CD4-positive, alpha-beta T cell (primary cell): ENCODE measurements at regions of chr10 and their contacts with region 1.

Region 1: DNA sequence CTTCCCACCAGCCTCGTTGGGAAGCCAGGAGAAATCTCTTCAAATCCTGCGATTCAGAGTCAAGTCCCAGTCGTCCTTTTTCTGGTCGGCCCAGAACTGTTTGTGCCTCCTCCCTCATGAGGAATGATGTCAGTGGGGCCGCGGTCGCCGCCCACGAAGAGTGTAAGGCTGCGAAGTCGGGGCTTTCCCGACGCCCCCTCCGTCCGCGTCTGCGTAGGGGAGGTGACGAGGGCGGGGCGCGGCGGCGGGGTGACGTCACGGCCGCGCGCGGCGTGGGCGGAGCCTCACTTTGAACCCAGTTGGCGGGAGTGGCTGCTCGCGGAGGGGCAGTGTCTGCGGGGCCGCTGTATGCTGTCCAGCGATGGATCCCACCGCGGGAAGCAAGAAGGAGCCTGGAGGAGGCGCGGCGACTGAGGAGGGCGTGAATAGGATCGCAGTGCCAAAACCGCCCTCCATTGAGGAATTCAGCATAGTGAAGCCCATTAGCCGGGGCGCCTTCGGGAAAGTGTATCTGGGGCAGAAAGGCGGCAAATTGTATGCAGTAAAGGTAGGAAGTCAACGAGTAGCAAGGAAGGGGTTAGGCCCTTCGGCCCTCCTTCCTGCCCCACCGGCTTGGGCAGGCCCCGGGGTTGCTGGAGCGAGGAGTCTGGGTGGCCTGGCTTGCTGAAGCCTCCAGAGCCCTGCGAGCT is at the start of gene MASTL:
- DNase-seq: peak; percentile 88 to 98 (median 93)
- ATAC-seq: peak; percentile 77
- H3K4me3 ChIP-seq: peak within 1 kb of the TSS; percentile 97
- H3K4me3 Mint-ChIP-seq: peak within 1 kb of the TSS; percentile 97
- H3K27ac ChIP-seq: peak within 1 kb of the TSS; percentile 100
- H3K27ac Mint-ChIP-seq: peak within 1 kb of the TSS; percentile 100
- H3K4me1 ChIP-seq: peaks cover 31% of the 10 kb centered on the region
- H3K4me1 Mint-ChIP-seq: peaks cover 53% of the 10 kb centered on the region
- H3K27me3 ChIP-seq: no peaks in the 10 kb centered on the region
- H3K27me3 Mint-ChIP-seq: no peaks in the 10 kb centered on the region
- CTCF ChIP-seq: no peak
- total RNA-seq, gene MASTL: 24.2 to 25.1 TPM

Region 2: GRCh38 chr10:26448706-26449435 is 706.3 kb before region 1 on chr10:
- CTCF ChIA-PET with region 1: no interaction called
- POLR2A ChIA-PET with region 1: no interaction called
- intact Hi-C with region 1: loop called (anchors 10 kb)
- DNase-seq: peak; percentile 42 to 94 (median 62)
- ATAC-seq: peak; percentile 82
- H3K4me3 ChIP-seq: peak overlapping the region; percentile 20
- H3K4me3 Mint-ChIP-seq: peak overlapping the region; percentile 84
- H3K27ac ChIP-seq: peak overlapping the region; percentile 70 to 79
- H3K27ac Mint-ChIP-seq: peak overlapping the region; percentile 94
- H3K4me1 ChIP-seq: peaks cover 66% of the 10 kb centered on the region
- H3K4me1 Mint-ChIP-seq: peaks cover 92% of the 10 kb centered on the region
- H3K27me3 ChIP-seq: no peaks in the 10 kb centered on the region
- H3K27me3 Mint-ChIP-seq: no peaks in the 10 kb centered on the region
- CTCF ChIP-seq: no peak

Region 3: DNA sequence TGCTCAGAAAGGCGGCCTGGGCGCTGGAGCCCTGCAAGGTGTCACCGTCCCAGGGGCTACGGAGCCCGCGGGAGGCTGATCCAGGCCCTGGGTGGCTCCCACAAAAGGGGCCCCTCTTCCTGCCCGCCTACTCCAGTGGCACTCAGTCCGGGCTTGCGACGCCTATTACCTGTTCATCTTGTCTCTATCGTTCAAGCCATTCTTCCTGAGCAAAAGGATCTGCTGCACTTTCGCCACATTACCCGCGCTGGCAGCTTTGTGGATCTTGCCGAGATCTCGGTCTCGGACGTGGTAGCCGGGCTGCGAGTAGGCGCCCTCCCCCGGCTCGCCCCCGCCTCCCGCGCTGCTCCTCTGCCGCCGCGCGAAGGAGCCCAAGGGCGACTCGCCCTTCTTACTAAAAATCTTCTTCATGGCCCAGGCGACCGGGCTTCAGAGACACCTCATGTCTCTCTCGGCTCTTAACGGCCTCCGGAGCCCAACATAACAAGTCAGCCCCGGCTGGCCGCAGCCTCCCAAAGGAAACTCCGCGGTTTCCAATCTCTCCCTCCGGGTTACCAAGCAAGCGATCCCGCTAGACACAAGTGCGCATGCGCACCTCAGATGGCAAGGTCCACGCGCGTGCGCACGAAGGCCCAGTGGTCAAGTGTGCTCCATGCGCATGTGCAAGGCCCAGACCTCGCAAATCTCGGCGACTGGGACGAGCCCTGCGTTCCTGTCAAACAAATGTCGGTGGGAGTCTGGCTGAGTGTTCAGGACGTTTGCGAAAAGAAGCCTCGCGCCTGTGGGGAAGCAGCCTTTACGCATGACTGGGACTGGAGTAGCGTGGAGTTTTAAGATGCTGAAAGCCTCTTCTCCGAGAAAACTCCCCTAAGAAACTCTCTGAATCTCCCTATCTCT is 55.0 kb before region 1 on chr10 and contains the start of gene ANKRD26:
- CTCF ChIA-PET with region 1: interaction called, 10 read pairs
- POLR2A ChIA-PET with region 1: interaction called, 46 read pairs
- intact Hi-C with region 1: loop called (anchors 2 to 5 kb)
- DNase-seq: peak; percentile 90 to 99 (median 95)
- ATAC-seq: peak; percentile 53
- H3K4me3 ChIP-seq: peak within 1 kb of the TSS; percentile 71
- H3K4me3 Mint-ChIP-seq: peak within 1 kb of the TSS; percentile 95
- H3K27ac ChIP-seq: peak within 1 kb of the TSS; percentile 82 to 85
- H3K27ac Mint-ChIP-seq: peak within 1 kb of the TSS; percentile 92
- H3K4me1 ChIP-seq: peaks cover 29% of the 10 kb centered on the region
- H3K4me1 Mint-ChIP-seq: peaks cover 51% of the 10 kb centered on the region
- H3K27me3 ChIP-seq: no peaks in the 10 kb centered on the region
- H3K27me3 Mint-ChIP-seq: no peaks in the 10 kb centered on the region
- CTCF ChIP-seq: no peak
- total RNA-seq, gene ANKRD26: 6.2 to 6.6 TPM

Region 4: DNA sequence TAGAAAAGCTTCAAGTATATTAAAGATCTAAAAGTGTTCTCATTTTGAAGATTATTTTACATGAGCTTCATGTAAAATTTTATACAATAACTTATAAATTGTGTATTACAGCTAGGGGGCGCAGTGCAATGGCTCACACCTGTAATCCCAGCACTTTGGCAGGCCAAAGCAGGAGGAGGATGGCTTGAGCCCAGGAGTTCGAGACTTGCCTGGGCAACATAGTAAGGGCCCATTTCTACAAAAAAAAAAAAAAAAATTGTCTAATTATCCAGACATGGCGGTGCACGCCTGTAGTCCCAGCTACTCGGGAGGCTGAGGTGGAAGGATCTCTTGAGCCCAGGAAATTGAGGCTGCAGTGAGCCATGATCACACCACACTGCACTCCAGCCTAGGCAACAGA is 68.8 kb after region 1 on chr10:
- CTCF ChIA-PET with region 1: interaction called, 3 read pairs
- POLR2A ChIA-PET with region 1: interaction called, 12 read pairs
- intact Hi-C with region 1: no loop called
- DNase-seq: peak; percentile 11 to 79 (median 32)
- ATAC-seq: peak; percentile 68
- H3K4me3 ChIP-seq: no peak overlapping the region
- H3K4me3 Mint-ChIP-seq: no peak overlapping the region
- H3K27ac ChIP-seq: no peak overlapping the region
- H3K27ac Mint-ChIP-seq: peak overlapping the region; percentile 40
- H3K4me1 ChIP-seq: peaks cover 9% of the 10 kb centered on the region
- H3K4me1 Mint-ChIP-seq: peaks cover 15% of the 10 kb centered on the region
- H3K27me3 ChIP-seq: no peaks in the 10 kb centered on the region
- H3K27me3 Mint-ChIP-seq: no peaks in the 10 kb centered on the region
- CTCF ChIP-seq: peak; percentile 87

Region 5: DNA sequence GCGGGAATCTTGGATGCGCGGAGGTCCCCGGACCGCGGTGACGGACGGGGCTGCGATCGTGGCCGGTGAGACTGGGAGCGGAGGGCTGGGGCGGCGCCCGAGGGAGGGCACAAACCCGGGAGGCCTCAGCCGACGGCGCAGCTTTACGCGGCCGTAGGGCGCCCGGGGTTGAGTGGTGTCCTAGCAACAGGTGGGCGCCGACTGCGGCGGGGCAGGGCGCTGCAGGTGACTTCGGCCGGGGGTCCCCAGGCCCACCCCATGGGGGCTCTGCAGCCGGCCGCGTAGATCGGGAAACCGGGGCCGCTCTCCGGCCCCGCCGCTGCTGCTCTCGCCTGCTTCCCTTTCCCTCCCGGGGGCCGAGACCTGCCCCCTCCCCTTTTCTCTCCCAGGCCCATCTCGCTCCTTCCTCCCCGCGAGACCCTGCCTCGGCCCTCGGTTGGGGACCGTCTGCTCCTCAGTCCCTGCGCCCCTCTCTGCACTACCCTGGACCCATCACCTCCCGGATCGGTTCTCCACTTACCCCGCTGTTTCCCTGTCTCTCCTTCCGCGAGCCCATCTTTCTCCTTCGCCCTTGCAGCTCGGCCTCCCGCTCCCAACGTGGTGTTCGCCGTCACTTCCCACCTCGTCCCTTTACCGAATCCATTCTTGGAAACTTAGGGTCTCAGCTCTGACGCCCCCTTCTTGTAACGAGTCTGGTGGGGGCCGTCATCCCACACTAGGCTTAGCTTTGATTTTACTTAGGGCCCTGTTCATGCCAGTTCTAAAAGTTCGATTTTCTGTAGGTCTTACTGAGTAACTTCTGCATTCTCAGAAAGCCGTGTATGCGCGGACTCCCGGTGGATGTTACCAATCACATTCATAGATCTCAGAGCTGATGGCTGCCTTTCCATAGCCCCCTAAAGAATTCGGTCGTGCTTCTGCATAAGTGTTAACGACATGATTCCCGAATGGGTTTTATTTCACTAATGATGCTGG is 103.9 kb after region 1 on chr10:
- CTCF ChIA-PET with region 1: no interaction called
- POLR2A ChIA-PET with region 1: interaction called, 12 read pairs
- intact Hi-C with region 1: no loop called
- DNase-seq: peak in 3 of 14 experiments; percentile 34 to 46 (median 38)
- ATAC-seq: no peak
- H3K4me3 ChIP-seq: peak overlapping the region; percentile 53
- H3K4me3 Mint-ChIP-seq: peak overlapping the region; percentile 91
- H3K27ac ChIP-seq: no peak overlapping the region
- H3K27ac Mint-ChIP-seq: no peak overlapping the region
- H3K4me1 ChIP-seq: peaks cover 21% of the 10 kb centered on the region
- H3K4me1 Mint-ChIP-seq: peaks cover 25% of the 10 kb centered on the region
- H3K27me3 ChIP-seq: peaks cover 22 to 37% of the 10 kb centered on the region in 2 experiments
- H3K27me3 Mint-ChIP-seq: peaks cover 62% of the 10 kb centered on the region
- CTCF ChIP-seq: no peak

Region 6: DNA sequence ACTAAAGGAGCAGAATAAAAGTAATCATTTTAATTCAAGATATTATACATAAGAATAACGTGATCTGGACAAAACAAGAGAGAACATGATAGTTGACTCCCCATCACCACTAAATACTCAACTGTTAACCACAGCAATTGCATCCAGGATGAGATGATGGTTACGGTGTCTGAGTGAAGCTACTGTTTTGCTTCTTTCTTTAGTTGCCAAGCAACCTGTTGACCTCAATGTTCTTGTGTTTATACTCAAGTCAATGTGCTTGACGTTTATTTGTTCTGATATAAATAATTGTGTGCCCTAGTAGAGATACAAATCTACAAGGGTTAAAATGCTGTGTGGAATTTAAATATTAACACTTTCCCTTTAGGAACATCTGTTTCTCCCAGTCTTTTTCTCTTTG is 1179.1 kb after region 1 on chr10:
- CTCF ChIA-PET with region 1: no interaction called
- POLR2A ChIA-PET with region 1: interaction called, 11 read pairs
- intact Hi-C with region 1: no loop called
- DNase-seq: peak in 8 of 14 experiments; percentile 17 to 97 (median 52)
- ATAC-seq: peak; percentile 68
- H3K4me3 ChIP-seq: peak overlapping the region; percentile 76
- H3K4me3 Mint-ChIP-seq: peak overlapping the region; percentile 90
- H3K27ac ChIP-seq: peak overlapping the region; percentile 97 to 99
- H3K27ac Mint-ChIP-seq: peak overlapping the region; percentile 98
- H3K4me1 ChIP-seq: peaks cover 64% of the 10 kb centered on the region
- H3K4me1 Mint-ChIP-seq: peaks cover 85% of the 10 kb centered on the region
- H3K27me3 ChIP-seq: no peaks in the 10 kb centered on the region
- H3K27me3 Mint-ChIP-seq: no peaks in the 10 kb centered on the region
- CTCF ChIP-seq: no peak